ENCODE measurements at regions of chr18 and their contacts with region 1.

Region 1: DNA sequence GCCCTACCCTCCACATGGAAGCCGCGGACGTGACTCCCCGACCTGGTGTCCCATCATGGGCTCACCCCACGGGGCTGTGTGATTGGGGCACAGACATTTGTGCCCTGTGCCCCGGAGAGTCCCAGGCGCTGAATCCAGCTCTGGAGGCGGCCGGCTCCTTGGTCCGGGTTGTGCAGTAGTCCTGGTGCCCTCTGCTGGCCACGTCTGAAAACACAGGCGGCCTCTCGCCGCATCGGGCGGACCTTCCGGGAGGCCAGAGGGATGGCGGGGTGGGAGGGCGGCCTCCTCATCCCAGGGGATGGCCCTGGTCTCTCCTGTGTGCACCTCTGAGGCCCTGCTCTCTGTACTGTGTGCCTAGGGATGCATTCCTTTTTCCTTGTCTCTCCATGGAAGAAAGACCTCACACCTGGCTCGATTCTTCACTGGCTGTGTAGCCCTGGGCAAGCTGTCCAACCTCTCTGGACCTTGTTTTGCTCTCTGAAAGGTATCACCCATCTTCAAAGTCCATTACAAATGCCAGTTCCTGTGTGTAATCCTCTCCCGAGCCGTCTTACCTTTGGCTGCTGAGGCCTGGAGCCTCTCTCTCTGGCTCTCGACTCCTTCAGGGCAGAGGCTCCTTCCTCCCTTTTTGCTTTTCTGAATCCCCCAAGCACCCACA is 27.6 kb downstream of the CELF4 start:
- DNase-seq: peak in 4 of 9 experiments; percentile 7 to 18 (median 12)
- ATAC-seq: no peak
- H3K4me3 ChIP-seq: no peak overlapping the region
- H3K4me3 Mint-ChIP-seq: no peak overlapping the region
- H3K27ac ChIP-seq: no peak overlapping the region
- H3K27ac Mint-ChIP-seq: no peak overlapping the region
- H3K4me1 ChIP-seq: peaks cover 3% of the 10 kb centered on the region
- H3K4me1 Mint-ChIP-seq: peaks cover 2% of the 10 kb centered on the region
- H3K27me3 ChIP-seq: no peaks in the 10 kb centered on the region
- H3K27me3 Mint-ChIP-seq: peaks cover 32% of the 10 kb centered on the region
- CTCF ChIP-seq: no peak

Region 2: DNA sequence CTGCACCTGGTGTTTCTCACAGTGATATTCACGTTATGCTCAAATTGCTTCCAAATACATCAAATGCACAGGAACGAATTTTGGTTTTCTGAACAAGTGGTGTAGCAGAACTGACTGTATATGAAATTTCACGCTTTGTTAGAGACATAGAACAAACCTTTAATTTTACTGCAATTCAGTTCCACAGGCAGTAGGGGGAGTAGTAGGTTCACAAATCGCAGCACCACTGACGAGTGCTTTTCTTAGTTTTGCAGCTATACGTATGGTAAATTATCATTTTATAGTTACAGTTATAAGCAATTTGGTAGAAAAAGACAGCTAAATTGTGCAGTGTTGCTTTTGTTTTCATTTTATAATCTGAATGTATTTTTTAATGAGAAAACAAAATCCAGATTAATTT is 595.7 kb before region 1 on chr18:
- CTCF ChIA-PET with region 1: no interaction called
- POLR2A ChIA-PET with region 1: no interaction called
- intact Hi-C with region 1: loop called in 1 of 2 experiments (anchors 5 kb)
- DNase-seq: peak in 2 of 9 experiments; percentile 7 to 22
- ATAC-seq: no peak
- H3K4me3 ChIP-seq: no peak overlapping the region
- H3K4me3 Mint-ChIP-seq: no peak overlapping the region
- H3K27ac ChIP-seq: no peak overlapping the region
- H3K27ac Mint-ChIP-seq: no peak overlapping the region
- H3K4me1 ChIP-seq: no peaks in the 10 kb centered on the region
- H3K4me1 Mint-ChIP-seq: no peaks in the 10 kb centered on the region
- H3K27me3 ChIP-seq: no peaks in the 10 kb centered on the region
- H3K27me3 Mint-ChIP-seq: no peaks in the 10 kb centered on the region
- CTCF ChIP-seq: peak; percentile 51

Region 3: DNA sequence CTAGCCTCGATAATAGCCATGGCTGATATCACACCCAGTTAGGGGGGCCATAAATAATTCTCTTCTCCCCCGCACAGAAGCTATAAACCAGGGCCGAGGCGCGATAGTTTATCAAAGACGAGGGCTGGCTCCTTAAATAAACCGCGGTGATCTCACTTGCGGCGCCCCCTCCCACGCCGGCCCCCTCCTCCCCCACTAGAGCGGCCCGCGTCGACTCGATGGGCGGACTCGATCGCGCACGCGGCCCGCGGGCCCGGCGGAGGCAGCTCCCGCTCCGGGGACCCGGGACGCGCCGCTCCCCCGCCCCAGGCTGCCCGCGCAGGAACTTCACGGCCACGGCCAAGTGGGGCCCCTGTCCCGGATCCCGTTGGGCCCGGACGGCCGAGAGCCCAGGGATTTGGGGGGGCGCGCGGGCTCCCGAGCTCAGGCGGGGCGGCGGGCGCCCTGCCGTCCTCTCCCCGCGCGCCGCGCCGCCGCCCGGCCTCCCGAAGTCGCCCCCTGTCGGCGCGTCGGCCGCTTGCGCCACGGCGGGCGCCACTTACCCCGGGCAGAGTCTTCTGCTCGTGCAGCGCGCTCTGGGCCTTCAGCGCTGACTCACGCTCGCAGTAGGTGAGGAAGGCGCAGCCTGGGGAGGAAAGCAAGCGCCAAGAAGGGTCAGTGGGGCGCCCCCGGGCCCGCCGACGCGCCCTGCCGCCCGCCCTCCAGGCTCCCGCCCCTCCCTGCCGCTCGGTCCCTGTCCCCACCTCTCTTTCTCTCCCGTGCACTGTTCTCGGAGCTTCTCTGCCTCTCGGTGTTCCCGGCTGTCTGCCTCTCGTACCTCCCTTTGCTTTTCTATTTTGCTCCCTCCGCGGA is 52.8 kb before region 1 on chr18:
- CTCF ChIA-PET with region 1: no interaction called
- POLR2A ChIA-PET with region 1: no interaction called
- intact Hi-C with region 1: no loop called
- DNase-seq: no peak
- ATAC-seq: no peak
- H3K4me3 ChIP-seq: no peak overlapping the region
- H3K4me3 Mint-ChIP-seq: no peak overlapping the region
- H3K27ac ChIP-seq: no peak overlapping the region
- H3K27ac Mint-ChIP-seq: no peak overlapping the region
- H3K4me1 ChIP-seq: no peaks in the 10 kb centered on the region
- H3K4me1 Mint-ChIP-seq: peaks cover 10% of the 10 kb centered on the region
- H3K27me3 ChIP-seq: peaks cover 8 to 11% of the 10 kb centered on the region in 2 experiments
- H3K27me3 Mint-ChIP-seq: peaks cover 54% of the 10 kb centered on the region
- CTCF ChIP-seq: no peak

Measured in CD8-positive, alpha-beta T cell (primary cell).